Posterior cingulate gyrus (tissue), 11 donors: ENCODE measurements at regions of chr19 and their contacts with region 1.

Region 1: GRCh38 chr19:44113138-44113783 is at the start of gene ZNF225:
- DNase-seq: peak; percentile 96 to 99 (median 97)

Region 2: DNA sequence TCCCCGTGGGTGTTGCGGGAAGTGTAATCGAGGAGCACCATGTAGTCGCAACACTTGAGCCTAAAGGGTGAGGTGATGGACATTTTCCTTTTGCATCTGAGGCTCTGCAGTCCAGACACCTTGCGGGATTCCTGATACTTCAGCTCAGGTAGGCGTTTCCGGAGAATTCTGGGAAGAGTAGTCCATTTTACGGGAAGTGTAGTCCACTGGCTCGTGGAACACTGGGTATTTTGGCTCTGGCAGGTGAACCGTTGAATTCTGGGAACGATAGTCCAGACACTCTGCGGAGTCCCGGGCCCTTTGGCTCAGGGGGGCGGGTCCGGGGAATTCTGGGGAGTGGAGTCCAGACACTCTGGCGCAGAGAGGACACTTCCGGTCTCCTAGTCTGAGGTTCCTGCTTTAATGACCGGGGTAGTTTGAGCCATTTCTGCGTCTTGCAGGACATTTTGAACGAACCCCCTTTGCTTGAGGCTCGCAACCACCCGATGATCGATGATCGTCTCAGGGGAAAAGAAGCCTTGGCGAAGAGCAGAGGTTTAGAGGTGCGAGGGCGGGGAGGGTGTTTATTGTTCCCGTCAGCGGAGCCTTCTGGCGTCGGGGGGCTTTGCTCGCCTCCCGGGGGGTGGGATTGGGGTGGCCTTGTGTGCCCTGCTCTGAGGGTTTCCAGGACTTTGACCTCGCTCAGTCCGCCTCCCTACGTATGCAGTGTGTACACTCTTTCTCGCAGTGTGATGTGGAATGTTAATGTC is 61.4 kb before region 1 on chr19 and contains the start of gene ZNF223:
- intact Hi-C with region 1: loop called (anchors 1 kb)
- DNase-seq: peak; percentile 95 to 99 (median 97)

Region 3: GRCh38 chr19:44071824-44072542 is 41.3 kb before region 1 on chr19 and contains the start of gene ZNF284:
- intact Hi-C with region 1: loop called (anchors 1 kb)
- DNase-seq: peak; percentile 86 to 98 (median 90)

Region 4: GRCh38 chr19:44083866-44084265 is 29.4 kb before region 1 on chr19:
- intact Hi-C with region 1: no loop called
- DNase-seq: no peak

Region 5: DNA sequence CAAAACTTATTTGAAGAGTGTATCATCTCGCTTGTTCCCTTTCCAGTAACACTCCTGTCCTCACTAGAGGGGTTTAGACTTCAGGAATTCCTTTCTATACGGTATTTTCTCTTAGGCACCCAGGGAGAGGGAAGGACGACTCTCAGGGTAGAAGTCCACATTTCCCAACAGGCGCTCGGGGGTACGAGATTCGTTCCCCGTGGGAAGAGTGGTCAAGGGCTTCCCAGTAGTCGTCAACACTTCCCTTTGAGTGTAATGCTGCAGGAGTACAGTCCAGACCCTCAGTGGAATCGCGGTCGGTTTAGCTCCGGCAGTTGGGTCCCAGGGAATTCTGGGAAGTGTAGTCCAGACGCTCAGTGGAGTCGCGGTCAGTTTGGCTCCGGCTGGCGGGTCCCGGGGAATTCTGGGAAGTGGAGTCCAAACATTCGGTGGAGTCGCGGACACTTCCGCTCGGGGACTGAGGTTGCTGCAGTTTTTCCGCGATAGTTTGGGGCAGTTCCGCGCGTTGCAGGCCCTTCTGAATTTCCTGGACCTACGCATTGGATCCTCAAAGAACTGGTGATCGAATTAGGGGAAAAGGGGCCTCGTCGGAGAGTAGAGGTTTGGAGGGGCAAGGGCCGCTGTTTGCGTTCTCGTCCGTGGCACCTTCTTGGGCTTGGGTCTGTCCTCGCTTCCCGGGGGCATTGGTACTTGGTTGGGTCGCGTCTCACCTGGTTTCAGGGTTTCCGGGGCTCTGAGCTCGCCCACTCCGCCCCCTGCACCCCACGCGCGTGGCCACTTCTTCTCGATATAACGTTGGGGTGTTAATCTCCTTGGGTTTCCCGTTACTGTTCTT is 19.1 kb before region 1 on chr19 and contains the start of gene ZNF224:
- intact Hi-C with region 1: loop called (anchors 1 kb)
- DNase-seq: peak; percentile 91 to 99 (median 94)

Region 6: GRCh38 chr19:44164673-44165512 is 51.6 kb after region 1 on chr19 and contains the start of gene ZNF226:
- intact Hi-C with region 1: loop called (anchors 1 kb)
- DNase-seq: peak; percentile 88 to 98 (median 92)

Region 7: DNA sequence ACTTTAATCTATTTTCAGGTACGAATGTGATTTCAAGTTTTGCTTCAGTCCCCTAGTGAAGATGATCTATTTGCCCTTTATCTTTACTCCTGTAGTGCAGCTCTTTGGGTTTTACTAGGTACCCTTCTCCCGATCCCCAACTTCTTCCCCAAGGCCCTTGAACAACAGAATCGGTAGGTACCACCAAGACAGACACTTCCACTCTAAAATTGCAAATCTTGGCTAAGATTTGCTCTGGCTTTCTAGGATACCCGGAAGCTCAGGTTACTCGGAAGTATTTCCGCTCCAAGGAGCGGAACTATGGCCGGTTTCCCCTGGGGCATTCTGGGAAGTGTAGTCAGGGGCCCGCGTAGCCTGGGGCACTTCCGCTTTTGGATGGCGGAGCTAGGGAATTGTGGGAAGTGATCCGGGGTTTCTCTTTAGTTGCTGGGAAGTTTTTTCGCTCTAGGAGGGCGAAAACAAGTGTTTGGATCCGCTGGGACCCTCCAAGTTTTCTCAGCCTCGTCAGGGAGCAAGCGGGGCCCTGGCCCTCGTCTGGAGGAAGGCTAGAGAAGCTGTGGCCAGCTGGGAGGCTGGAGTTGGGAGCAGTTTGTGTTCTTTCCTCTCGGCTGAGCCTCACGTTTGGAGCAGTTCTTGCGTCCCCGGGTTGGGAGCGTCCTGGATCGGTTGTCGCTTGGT is 94.0 kb after region 1 on chr19:
- intact Hi-C with region 1: loop called (anchors 5 kb)
- DNase-seq: peak; percentile 78 to 98 (median 87)

Region 8: DNA sequence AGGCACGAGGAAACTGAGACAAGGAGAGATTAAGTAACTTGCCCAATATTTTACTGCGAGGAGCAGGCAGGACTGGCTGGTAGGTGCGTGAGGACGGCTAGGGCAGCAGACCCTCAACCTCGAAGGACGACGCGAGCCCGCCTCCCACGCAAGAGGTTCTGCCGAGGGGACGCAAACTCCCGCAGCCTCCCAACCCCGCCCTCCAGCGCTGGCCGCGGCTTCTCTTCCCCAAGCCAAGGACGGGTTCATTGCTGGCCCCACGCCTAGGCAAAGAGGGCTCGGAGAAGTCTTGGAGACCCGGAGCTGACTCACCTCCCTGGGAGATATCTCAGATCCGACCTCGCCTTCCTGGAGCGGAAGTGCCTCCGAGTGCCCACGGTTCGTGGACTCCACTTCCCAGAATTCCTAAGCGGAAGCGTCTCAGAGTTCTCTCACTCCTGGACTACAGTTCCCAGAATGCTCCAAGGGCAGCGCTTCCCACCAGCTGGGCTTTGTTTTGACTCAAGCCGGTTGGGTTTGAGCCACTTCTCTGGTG is 191.5 kb after region 1 on chr19 and contains the start of gene ZNF235:
- intact Hi-C with region 1: loop called (anchors 2 kb)
- DNase-seq: peak; percentile 82 to 98 (median 89)